Breast epithelium (tissue), 4 donors: ENCODE measurements at regions of chr5 and their contacts with region 1.

Region 1: GRCh38 chr5:39555788-39556187 is 131.0 kb upstream of the DAB2 start:
- DNase-seq: no peak
- H3K4me3 ChIP-seq: no peak overlapping the region
- H3K27ac ChIP-seq: no peak overlapping the region
- H3K4me1 ChIP-seq: no peaks in the 10 kb centered on the region
- H3K27me3 ChIP-seq: no peaks in the 10 kb centered on the region
- CTCF ChIP-seq: no peak
- POLR2A ChIP-seq: no peak

Region 2: GRCh38 chr5:39005566-39006232 is 550.1 kb before region 1 on chr5:
- intact Hi-C with region 1: no loop called
- DNase-seq: no peak
- H3K4me3 ChIP-seq: no peak overlapping the region
- H3K27ac ChIP-seq: no peak overlapping the region
- H3K4me1 ChIP-seq: no peaks in the 10 kb centered on the region
- H3K27me3 ChIP-seq: no peaks in the 10 kb centered on the region
- CTCF ChIP-seq: peak in 1 of 3 donors; percentile 8
- POLR2A ChIP-seq: no peak

Region 3: GRCh38 chr5:40052808-40053207 is 497.0 kb after region 1 on chr5:
- intact Hi-C with region 1: loop called (anchors 5 kb)
- DNase-seq: no peak
- H3K4me3 ChIP-seq: no peak overlapping the region
- H3K27ac ChIP-seq: no peak overlapping the region
- H3K4me1 ChIP-seq: no peaks in the 10 kb centered on the region
- H3K27me3 ChIP-seq: no peaks in the 10 kb centered on the region
- CTCF ChIP-seq: no peak
- POLR2A ChIP-seq: no peak